Head of caudate nucleus (tissue), 42 donors: ENCODE measurements at regions of chr4 and their contacts with region 1.

Region 1: GRCh38 chr4:158624889-158625478 is 46.7 kb downstream of the C4orf46 start:
- DNase-seq: peak in 16 of 42 donors; percentile 13 to 55 (median 24)

Region 2: GRCh38 chr4:158259955-158260575 is 364.9 kb before region 1 on chr4:
- intact Hi-C with region 1: loop called (anchors 10 kb)
- DNase-seq: no peak